GM10248 (cell line): ENCODE measurements at regions of chr17 and their contacts with region 1.

Region 1: GRCh38 chr17:27879987-27880608 is 13.1 kb downstream of the LYRM9 start:
- DNase-seq: peak; percentile 87
- CTCF ChIP-seq: peak; percentile 90

Region 2: DNA sequence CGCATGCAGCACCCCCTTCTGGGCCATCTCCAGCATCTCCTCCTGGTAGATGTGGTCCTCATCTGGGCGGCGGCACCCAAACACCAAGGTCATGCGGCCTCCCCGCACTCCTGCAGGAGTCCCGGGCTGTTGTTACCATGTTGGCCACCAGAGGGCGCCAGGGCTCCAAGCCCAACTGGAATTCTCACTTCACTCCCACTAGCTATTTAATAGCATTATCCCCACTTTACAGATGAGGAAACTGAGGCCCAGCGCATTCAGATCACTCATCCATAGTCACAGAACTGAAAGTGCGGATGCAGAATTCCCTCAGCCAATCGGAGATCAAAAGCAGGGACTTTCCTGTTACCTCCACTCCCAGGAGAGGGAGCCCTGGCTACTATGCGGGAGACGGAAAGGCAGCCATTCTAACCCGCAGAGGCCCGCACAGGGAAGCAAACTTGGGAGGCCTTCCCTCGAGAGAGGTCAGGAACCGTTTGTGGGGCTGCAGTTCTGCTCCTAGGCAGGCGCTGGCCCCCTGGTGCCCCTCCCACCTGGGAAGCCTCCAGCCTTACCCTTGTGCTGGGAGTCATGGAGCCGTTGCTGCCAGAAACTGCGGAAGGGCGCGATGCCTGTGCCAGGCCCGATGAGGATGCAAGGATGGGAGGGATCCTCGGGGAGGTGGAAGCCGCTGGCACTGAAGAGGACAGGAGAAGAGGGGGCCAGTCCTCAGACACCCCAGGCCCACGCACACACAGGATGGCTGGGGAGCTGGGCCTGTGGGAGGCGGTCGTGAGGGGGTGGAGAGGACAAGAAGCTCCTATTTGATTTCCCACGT is 119.8 kb before region 1 on chr17:
- CTCF ChIA-PET with region 1: interaction called, 287 read pairs
- POLR2A ChIA-PET with region 1: no interaction called
- DNase-seq: peak; percentile 73
- CTCF ChIP-seq: peak; percentile 94

Region 3: DNA sequence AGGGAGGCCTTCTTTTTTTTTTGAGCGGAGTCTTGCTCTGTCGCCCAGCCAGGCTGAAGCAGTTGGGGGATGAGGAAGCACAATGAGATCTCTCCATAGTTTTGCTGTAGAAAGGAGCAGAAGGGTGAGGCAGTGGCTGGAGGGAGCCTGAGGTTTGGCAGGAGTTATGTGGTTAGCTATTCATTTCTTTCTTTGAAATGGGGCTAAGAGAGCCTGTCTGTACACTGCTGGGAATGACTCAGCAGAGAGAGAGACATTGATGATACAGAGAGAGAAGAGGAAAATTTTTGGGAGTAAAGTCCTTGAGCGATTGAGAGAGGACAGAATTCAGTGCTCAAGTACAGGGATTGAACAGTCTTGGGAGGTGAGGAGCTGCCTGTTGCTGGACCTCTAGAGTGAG is 101.9 kb before region 1 on chr17:
- CTCF ChIA-PET with region 1: interaction called, 15 read pairs
- POLR2A ChIA-PET with region 1: no interaction called
- DNase-seq: no peak
- CTCF ChIP-seq: no peak

Region 4: GRCh38 chr17:27818401-27819105 is 61.5 kb before region 1 on chr17:
- CTCF ChIA-PET with region 1: interaction called, 10 read pairs
- POLR2A ChIA-PET with region 1: no interaction called
- DNase-seq: no peak
- CTCF ChIP-seq: no peak

Region 5: GRCh38 chr17:27862004-27862403 is 18.1 kb before region 1 on chr17:
- CTCF ChIA-PET with region 1: interaction called, 12 read pairs
- POLR2A ChIA-PET with region 1: no interaction called
- DNase-seq: no peak
- CTCF ChIP-seq: no peak

Region 6: DNA sequence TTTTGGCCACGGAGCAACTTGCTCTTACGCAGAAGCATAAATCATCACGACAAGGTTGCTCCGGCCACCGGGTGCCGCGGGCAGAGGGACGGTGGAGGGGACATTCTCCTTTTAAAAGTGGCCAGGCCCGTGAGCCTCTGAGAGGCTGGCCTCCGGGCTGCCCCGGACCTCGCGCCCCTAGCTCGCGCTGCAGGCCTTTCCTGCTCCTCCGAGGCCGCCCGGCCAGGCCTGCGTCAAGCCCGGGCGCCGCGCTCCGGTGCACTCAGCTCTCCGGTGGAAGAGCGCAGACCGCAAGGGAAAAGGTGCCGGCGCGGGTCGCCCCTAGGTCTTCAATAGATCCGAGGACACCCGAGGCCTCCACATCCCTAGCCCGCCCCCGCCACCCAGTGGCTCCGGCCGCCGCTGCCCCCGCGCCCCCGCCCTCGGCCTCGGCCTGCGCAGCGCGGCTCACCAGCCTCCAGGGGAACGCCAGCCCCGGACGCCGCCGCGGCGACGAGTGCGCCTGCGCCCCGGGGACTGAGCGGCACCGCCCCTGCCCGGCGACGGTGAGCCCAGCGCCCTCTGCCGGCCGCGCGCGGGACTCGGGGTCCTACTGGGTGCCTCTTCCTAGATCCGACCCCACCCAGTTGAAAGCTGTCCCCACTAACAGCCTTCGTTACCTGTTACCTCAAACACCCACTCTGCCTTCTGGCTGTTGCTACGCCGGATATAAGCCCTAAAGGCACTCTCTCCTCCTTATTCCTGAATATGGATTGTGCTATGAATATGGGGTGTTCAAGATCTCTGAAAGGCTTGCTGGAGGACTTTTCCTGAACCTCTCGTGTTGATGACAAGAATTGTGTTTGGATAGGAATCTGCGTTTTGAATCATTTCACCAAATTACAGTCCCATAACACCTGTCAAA is 13.0 kb after region 1 on chr17 and contains the start of gene LYRM9:
- CTCF ChIA-PET with region 1: interaction called, 116 read pairs
- POLR2A ChIA-PET with region 1: no interaction called
- DNase-seq: peak; percentile 96
- CTCF ChIP-seq: peak; percentile 95